Prostate gland (tissue), 2 donors: ENCODE measurements at regions of chr13 and their contacts with region 1.

Region 1: GRCh38 chr13:113393563-113394338 is 29.8 kb upstream of the GRTP1 start:
- DNase-seq: peak; percentile 73
- H3K4me3 ChIP-seq: peak overlapping the region; percentile 51 to 65
- H3K27ac ChIP-seq: no peak overlapping the region
- H3K4me1 ChIP-seq: no peaks in the 10 kb centered on the region
- H3K27me3 ChIP-seq: no peaks in the 10 kb centered on the region
- CTCF ChIP-seq: peak; percentile 85 to 94 (median 94)
- POLR2A ChIP-seq: no peak

Region 2: GRCh38 chr13:112942689-112943308 is 451.0 kb before region 1 on chr13:
- intact Hi-C with region 1: loop called (anchors 10 kb)
- DNase-seq: peak; percentile 97
- H3K4me3 ChIP-seq: peak overlapping the region; percentile 35 to 54
- H3K27ac ChIP-seq: peak overlapping the region; percentile 82
- H3K4me1 ChIP-seq: no peaks in the 10 kb centered on the region
- H3K27me3 ChIP-seq: no peaks in the 10 kb centered on the region
- CTCF ChIP-seq: peak; percentile 95 to 99 (median 96)
- POLR2A ChIP-seq: no peak

Region 3: GRCh38 chr13:113275387-113275786 is 118.4 kb before region 1 on chr13:
- intact Hi-C with region 1: loop called (anchors 10 kb)
- DNase-seq: peak; percentile 28
- H3K4me3 ChIP-seq: no peak overlapping the region
- H3K27ac ChIP-seq: no peak overlapping the region
- H3K4me1 ChIP-seq: no peaks in the 10 kb centered on the region
- H3K27me3 ChIP-seq: no peaks in the 10 kb centered on the region
- CTCF ChIP-seq: peak; percentile 21 to 69 (median 61)
- POLR2A ChIP-seq: no peak

Region 4: GRCh38 chr13:113452942-113453901 is 59.5 kb after region 1 on chr13 and contains the start of gene ADPRHL1:
- intact Hi-C with region 1: loop called (anchors 5 kb)
- DNase-seq: no peak
- H3K4me3 ChIP-seq: no peak within 1 kb of the TSS
- H3K27ac ChIP-seq: no peak within 1 kb of the TSS
- H3K4me1 ChIP-seq: no peaks in the 10 kb centered on the region
- H3K27me3 ChIP-seq: no peaks in the 10 kb centered on the region
- CTCF ChIP-seq: no peak
- POLR2A ChIP-seq: no peak
- total RNA-seq, gene ADPRHL1: 3.7 to 3.9 TPM